Esophagus squamous epithelium (tissue), 5 donors: ENCODE measurements at regions of chr5 and their contacts with region 1.

Region 1: GRCh38 chr5:148374692-148375360 is 8.9 kb upstream of the FBXO38 start:
- DNase-seq: no peak
- H3K4me3 ChIP-seq: no peak overlapping the region
- H3K27ac ChIP-seq: no peak overlapping the region
- H3K4me1 ChIP-seq: peaks cover 0 to 30% (median 5%) of the 10 kb centered on the region in 3 donors
- H3K27me3 ChIP-seq: no peaks in the 10 kb centered on the region
- CTCF ChIP-seq: peak; percentile 21 to 87 (median 62)
- POLR2A ChIP-seq: no peak

Region 2: GRCh38 chr5:148179234-148179824 is 195.5 kb before region 1 on chr5:
- intact Hi-C with region 1: loop called (anchors 10 kb)
- DNase-seq: no peak
- H3K4me3 ChIP-seq: no peak overlapping the region
- H3K27ac ChIP-seq: no peak overlapping the region
- H3K4me1 ChIP-seq: no peaks in the 10 kb centered on the region
- H3K27me3 ChIP-seq: no peaks in the 10 kb centered on the region
- CTCF ChIP-seq: peak in 5 of 6 experiments; percentile 60 to 83 (median 66)
- POLR2A ChIP-seq: no peak

Region 3: GRCh38 chr5:148191010-148191409 is 183.8 kb before region 1 on chr5:
- intact Hi-C with region 1: no loop called
- DNase-seq: no peak
- H3K4me3 ChIP-seq: no peak overlapping the region
- H3K27ac ChIP-seq: no peak overlapping the region
- H3K4me1 ChIP-seq: peaks cover 0 to 18% (median 0%) of the 10 kb centered on the region in 3 donors
- H3K27me3 ChIP-seq: no peaks in the 10 kb centered on the region
- CTCF ChIP-seq: no peak
- POLR2A ChIP-seq: no peak

Region 4: DNA sequence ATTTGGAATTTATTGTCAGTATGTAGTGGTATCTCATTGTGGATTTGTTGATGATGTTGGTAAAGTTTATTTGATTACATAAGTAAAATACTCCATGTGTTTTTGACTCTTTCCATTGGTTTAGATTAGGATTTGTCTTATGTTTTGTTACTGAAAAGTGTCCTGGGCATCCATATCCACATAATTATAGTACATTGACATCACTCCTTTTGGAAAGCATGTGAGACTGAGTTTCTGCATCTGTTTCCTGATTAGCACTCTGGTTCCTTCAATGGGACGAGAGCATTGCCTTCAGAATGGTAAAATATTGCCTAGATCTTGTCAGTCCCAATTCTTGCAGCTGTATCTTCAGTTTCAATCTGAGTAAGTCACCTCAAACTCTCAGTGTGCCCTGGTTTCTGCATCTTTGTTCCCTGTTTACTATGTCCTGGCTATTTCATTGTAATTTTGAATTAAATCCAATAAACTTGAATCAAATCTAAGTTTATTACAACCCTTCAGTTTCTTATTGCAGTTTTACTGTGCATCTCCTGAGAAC is 137.1 kb after region 1 on chr5:
- intact Hi-C with region 1: no loop called
- DNase-seq: no peak
- H3K4me3 ChIP-seq: no peak overlapping the region
- H3K27ac ChIP-seq: no peak overlapping the region
- H3K4me1 ChIP-seq: no peaks in the 10 kb centered on the region
- H3K27me3 ChIP-seq: no peaks in the 10 kb centered on the region
- CTCF ChIP-seq: no peak
- POLR2A ChIP-seq: no peak

Region 5: GRCh38 chr5:148574167-148574566 is 199.3 kb after region 1 on chr5:
- intact Hi-C with region 1: no loop called
- DNase-seq: no peak
- H3K4me3 ChIP-seq: no peak overlapping the region
- H3K27ac ChIP-seq: no peak overlapping the region
- H3K4me1 ChIP-seq: no peaks in the 10 kb centered on the region
- H3K27me3 ChIP-seq: no peaks in the 10 kb centered on the region
- CTCF ChIP-seq: no peak
- POLR2A ChIP-seq: no peak

Region 6: DNA sequence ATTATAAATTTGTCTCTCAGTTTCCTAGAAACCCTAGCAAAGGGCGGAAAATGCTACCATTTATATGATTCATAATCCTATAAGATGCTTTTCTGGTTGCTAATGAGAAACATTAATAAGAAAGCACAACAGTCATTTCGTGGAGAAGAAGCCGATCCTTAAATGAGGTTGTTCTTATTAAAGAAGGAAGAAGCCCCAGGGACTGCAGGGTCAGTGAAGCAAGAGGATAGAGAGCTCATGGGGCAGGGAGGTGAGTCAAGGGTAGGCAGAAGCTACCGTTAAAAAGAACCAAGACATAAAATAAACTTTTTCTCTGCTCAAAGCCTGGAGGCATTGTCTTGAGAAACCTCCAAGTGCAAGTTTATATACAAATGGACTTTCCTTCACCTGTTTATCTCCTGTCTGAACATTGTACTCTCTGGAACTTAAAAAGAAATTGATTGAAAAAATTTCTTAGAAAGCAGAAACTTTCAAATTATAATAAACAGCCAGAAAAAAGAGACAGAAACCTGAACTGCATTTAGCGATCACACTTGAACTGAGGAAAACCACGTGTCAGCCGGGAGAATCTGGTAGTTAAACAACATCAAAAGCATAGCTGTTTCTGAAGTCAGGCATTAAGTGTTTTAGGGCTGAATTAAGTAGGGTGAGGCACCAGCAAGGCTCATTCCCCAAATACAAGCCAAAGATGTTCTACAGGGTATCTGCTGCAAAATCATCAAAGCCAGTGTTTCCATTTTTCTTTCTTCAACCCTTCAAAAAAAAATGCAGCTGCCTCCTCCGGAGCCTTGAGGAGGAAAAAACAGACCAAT is 257.6 kb after region 1 on chr5:
- intact Hi-C with region 1: no loop called
- DNase-seq: no peak
- H3K4me3 ChIP-seq: no peak overlapping the region
- H3K27ac ChIP-seq: no peak overlapping the region
- H3K4me1 ChIP-seq: no peaks in the 10 kb centered on the region
- H3K27me3 ChIP-seq: peaks cover 0 to 6% (median 2%) of the 10 kb centered on the region in 4 donors
- CTCF ChIP-seq: no peak
- POLR2A ChIP-seq: no peak